ENCODE measurements at regions of chr19 and their contacts with region 1.

Region 1: DNA sequence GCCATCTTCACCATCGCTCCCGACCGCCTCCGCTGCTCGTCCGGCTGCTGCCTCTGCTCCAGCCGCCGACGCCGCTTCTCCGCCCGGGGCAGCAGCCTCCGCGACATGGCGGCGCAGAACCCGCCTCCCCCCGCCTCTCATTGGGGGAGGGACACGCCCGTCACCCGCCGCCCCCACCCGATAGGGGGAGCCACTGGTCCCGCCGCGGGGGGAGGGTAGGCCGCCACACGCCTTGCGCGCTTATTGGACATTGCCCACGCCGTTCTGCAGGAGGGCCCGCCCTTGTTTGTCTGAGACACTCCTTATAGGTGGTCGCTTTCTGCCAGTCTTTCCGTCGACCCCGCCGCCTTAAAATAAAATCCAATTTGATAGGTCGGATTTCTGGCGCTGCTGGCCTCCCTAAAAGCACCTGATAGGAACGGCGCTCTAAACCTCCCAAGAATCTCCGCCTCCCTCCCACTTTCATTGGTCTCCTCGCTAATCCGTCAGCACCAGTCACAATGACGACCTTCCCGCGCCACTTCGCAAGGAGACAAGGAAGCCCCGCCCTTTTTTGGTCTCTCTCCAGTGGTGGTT is at the start of gene HNRNPL:
- DNase-seq: peak; percentile 100
- H3K4me3 ChIP-seq: peak within 1 kb of the TSS; percentile 80 to 90 (median 86)
- H3K4me3 Mint-ChIP-seq: peak within 1 kb of the TSS; percentile 88 to 94
- H3K27ac ChIP-seq: peak within 1 kb of the TSS; percentile 98 to 99
- H3K27ac Mint-ChIP-seq: peak within 1 kb of the TSS; percentile 98 to 99 (median 99)
- H3K4me1 ChIP-seq: peaks cover 32 to 42% of the 10 kb centered on the region in 2 donors
- H3K4me1 Mint-ChIP-seq: peaks cover 29% of the 10 kb centered on the region
- H3K27me3 ChIP-seq: no peaks in the 10 kb centered on the region
- H3K27me3 Mint-ChIP-seq: peaks cover 0 to 5% (median 1%) of the 10 kb centered on the region in 3 donors
- CTCF ChIP-seq: peak; percentile 23
- polyA plus RNA-seq, gene HNRNPL: 51.9 to 234 (median 58.7) TPM

Region 2: GRCh38 chr19:38736413-38737280 is 113.3 kb before region 1 on chr19:
- intact Hi-C with region 1: no loop called
- DNase-seq: no peak
- H3K4me3 ChIP-seq: peak overlapping the region in 1 of 3 experiments; percentile 59
- H3K4me3 Mint-ChIP-seq: peak overlapping the region; percentile 27 to 76
- H3K27ac ChIP-seq: no peak overlapping the region
- H3K27ac Mint-ChIP-seq: peak overlapping the region in 2 of 7 donors; percentile 24 to 78
- H3K4me1 ChIP-seq: peaks cover 36 to 51% of the 10 kb centered on the region in 2 donors
- H3K4me1 Mint-ChIP-seq: peaks cover 48% of the 10 kb centered on the region
- H3K27me3 ChIP-seq: peaks cover 0 to 13% of the 10 kb centered on the region in 2 donors
- H3K27me3 Mint-ChIP-seq: peaks cover 15 to 29% (median 19%) of the 10 kb centered on the region in 3 donors
- CTCF ChIP-seq: no peak

Region 3: GRCh38 chr19:38831142-38831605 is 18.8 kb before region 1 on chr19:
- intact Hi-C with region 1: loop called (anchors 2 kb)
- DNase-seq: peak; percentile 55 to 88 (median 69)
- H3K4me3 ChIP-seq: peak overlapping the region; percentile 60 to 81 (median 67)
- H3K4me3 Mint-ChIP-seq: peak overlapping the region; percentile 88 to 97
- H3K27ac ChIP-seq: peak overlapping the region; percentile 82 to 96
- H3K27ac Mint-ChIP-seq: peak overlapping the region; percentile 90 to 95 (median 94)
- H3K4me1 ChIP-seq: peaks cover 33 to 35% of the 10 kb centered on the region in 2 donors
- H3K4me1 Mint-ChIP-seq: peaks cover 29% of the 10 kb centered on the region
- H3K27me3 ChIP-seq: no peaks in the 10 kb centered on the region
- H3K27me3 Mint-ChIP-seq: no peaks in the 10 kb centered on the region
- CTCF ChIP-seq: no peak

Region 4: DNA sequence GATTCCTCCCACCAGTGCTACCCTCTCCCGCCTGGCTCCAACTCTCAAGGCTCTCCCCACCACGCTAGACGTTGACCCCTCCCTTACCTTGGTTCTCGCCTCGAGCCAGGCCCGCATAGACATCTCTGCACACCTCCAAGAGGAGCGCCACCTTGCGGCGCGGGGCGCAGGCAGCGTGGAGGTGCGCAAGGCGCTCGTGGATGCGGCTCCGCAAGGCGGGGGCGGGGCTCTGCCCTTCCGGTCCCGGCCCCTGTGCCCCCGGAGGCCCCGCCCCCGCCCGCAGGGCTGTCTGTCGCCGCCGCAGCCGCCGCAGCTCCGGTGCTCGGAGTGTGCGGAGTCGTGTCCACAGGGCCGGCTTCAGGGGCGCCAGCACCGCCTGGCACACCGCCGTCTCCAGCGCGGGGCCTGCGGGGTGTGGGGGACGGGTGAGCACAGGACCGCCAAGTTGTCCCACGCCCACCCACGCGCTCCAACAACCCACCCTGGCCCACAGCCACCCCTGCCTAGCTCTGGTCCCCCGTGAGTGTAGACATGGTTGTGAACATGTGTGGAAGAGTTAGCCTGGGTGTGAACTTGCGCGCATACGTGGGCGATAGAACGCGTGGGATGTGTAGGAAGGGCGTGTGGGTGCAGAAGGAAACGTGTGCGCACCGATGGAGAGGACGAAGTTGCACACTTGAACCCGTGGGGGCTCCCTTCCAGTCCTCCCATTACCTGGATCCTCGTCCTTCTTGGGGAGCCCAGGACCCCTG is 20.1 kb after region 1 on chr19:
- intact Hi-C with region 1: loop called in 1 of 2 experiments (anchors 2 kb)
- DNase-seq: peak; percentile 79 to 87 (median 84)
- H3K4me3 ChIP-seq: peak overlapping the region; percentile 24 to 77 (median 65)
- H3K4me3 Mint-ChIP-seq: peak overlapping the region; percentile 86 to 95
- H3K27ac ChIP-seq: no peak overlapping the region
- H3K27ac Mint-ChIP-seq: peak overlapping the region in 5 of 7 donors; percentile 10 to 84 (median 62)
- H3K4me1 ChIP-seq: peaks cover 19 to 26% of the 10 kb centered on the region in 2 donors
- H3K4me1 Mint-ChIP-seq: peaks cover 26% of the 10 kb centered on the region
- H3K27me3 ChIP-seq: no peaks in the 10 kb centered on the region
- H3K27me3 Mint-ChIP-seq: peaks cover 0 to 2% (median 0%) of the 10 kb centered on the region in 3 donors
- CTCF ChIP-seq: peak; percentile 97

Region 5: GRCh38 chr19:39053276-39054090 is 203.5 kb after region 1 on chr19:
- intact Hi-C with region 1: no loop called
- DNase-seq: no peak
- H3K4me3 ChIP-seq: no peak overlapping the region
- H3K4me3 Mint-ChIP-seq: no peak overlapping the region
- H3K27ac ChIP-seq: no peak overlapping the region
- H3K27ac Mint-ChIP-seq: no peak overlapping the region
- H3K4me1 ChIP-seq: no peaks in the 10 kb centered on the region
- H3K4me1 Mint-ChIP-seq: no peaks in the 10 kb centered on the region
- H3K27me3 ChIP-seq: no peaks in the 10 kb centered on the region
- H3K27me3 Mint-ChIP-seq: peaks cover 3 to 9% (median 7%) of the 10 kb centered on the region in 3 donors
- CTCF ChIP-seq: no peak

Measured in CD14-positive monocyte (primary cell).